Pancreas (tissue), 10 donors: ENCODE measurements at regions of chr12 and their contacts with region 1.

Region 1: DNA sequence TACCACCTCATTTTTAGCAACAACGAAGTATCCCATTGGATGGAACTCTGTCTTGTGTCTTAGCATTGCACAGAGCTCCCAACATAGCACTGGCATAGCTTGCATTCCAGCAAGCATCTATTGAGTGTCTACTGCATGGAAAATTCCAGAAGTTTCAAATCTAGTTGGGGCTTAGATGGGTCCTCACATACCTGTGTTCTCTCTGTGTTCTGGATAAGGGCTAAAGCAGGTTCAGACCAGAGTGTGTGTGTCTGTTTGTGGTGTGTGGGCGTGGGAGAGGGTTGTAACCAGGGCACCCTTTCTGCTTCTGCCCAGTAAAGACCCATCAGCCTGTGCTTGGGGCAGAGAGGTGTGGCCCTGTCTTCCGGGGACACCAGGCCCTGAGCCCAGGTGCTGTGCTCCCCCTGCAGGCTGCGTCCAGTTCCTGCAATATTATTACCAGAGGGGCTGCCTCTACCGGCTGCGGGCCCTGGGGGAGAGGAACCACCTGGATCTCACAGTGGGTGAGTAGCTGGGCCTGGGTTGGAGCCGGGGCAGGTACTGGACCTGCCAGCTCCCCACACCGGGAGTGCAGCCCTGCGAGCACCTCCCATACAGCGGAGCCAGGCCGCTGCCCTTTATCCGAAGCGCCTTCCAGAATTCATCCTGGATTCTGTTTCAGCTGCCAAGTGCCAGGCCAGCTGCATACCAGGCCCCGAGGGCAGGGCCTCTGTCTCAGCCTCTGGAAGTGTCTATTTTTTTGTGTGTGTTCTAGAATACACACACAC is 20.3 kb downstream of the RHOF start:
- DNase-seq: peak; percentile 55 to 87 (median 76)
- ATAC-seq: peak; percentile 72 to 93 (median 86)
- H3K4me3 ChIP-seq: no peak overlapping the region
- H3K27ac ChIP-seq: no peak overlapping the region
- H3K4me1 ChIP-seq: no peaks in the 10 kb centered on the region
- H3K27me3 ChIP-seq: no peaks in the 10 kb centered on the region
- CTCF ChIP-seq: peak; percentile 42 to 67 (median 62)

Region 2: GRCh38 chr12:121499929-121500793 is 273.0 kb before region 1 on chr12:
- intact Hi-C with region 1: no loop called
- DNase-seq: peak; percentile 42 to 93 (median 72)
- ATAC-seq: peak; percentile 82 to 97 (median 95)
- H3K4me3 ChIP-seq: no peak overlapping the region
- H3K27ac ChIP-seq: no peak overlapping the region
- H3K4me1 ChIP-seq: no peaks in the 10 kb centered on the region
- H3K27me3 ChIP-seq: no peaks in the 10 kb centered on the region
- CTCF ChIP-seq: peak; percentile 95 to 99 (median 98)

Region 3: DNA sequence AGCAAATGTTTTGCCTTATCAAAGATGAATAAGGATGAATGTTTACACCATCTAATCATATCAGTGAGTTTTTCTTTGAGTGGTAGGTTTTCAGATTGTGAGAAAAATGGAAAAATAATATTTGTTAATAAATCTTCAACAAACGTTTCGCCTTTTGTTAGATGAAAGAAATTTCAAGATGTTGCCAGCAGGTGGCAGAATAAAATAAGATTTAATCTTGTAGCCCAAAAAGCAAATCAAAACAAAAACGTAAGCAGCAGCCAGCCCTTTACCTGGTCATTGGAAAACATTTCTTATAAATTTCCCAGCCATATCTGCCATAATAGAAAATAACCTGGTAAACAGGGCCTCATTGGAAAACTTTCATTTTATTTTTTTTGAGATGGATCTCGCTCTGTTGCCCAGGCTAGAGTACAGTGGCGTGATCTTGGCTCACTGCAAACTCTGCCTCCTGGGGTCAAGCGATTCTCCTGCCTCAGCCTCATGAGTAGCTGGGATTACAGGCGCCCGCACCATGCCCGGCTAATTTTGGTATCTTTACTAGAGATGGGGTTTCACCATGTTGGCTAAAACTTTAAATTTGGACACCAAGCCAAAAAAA is 76.0 kb before region 1 on chr12:
- intact Hi-C with region 1: loop called (anchors 5 to 10 kb)
- DNase-seq: peak in 1 of 6 donors; percentile 7
- ATAC-seq: peak in 3 of 4 donors; percentile 71 to 78 (median 72)
- H3K4me3 ChIP-seq: no peak overlapping the region
- H3K27ac ChIP-seq: no peak overlapping the region
- H3K4me1 ChIP-seq: no peaks in the 10 kb centered on the region
- H3K27me3 ChIP-seq: no peaks in the 10 kb centered on the region
- CTCF ChIP-seq: peak in 3 of 4 donors; percentile 22 to 45 (median 42)

Region 4: DNA sequence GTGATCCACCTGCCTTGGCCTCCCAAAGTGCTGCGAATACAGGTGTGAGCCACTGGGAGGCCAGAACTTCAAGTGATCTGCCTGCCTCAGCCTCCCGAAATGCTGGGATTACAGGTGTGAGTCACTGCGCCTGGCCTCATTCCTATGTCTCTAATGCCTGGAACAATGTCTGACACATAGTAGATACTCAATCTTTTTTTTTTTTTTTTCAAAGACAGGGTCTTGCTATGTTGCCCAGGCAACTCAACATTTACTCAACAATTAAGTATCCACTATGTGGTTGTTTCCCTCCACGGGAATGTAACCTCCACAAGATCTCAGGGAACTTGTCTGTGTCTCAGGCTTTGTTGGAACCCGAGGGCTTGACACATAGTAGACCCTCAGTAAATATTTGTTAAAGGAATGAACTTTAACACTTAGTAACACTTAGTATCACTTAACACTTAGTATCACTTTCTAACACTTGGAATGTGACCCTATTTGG is 63.7 kb before region 1 on chr12:
- intact Hi-C with region 1: loop called in 1 of 3 experiments (anchors 10 kb)
- DNase-seq: peak in 1 of 6 donors; percentile 7
- ATAC-seq: no peak
- H3K4me3 ChIP-seq: no peak overlapping the region
- H3K27ac ChIP-seq: no peak overlapping the region
- H3K4me1 ChIP-seq: no peaks in the 10 kb centered on the region
- H3K27me3 ChIP-seq: no peaks in the 10 kb centered on the region
- CTCF ChIP-seq: no peak

Region 5: DNA sequence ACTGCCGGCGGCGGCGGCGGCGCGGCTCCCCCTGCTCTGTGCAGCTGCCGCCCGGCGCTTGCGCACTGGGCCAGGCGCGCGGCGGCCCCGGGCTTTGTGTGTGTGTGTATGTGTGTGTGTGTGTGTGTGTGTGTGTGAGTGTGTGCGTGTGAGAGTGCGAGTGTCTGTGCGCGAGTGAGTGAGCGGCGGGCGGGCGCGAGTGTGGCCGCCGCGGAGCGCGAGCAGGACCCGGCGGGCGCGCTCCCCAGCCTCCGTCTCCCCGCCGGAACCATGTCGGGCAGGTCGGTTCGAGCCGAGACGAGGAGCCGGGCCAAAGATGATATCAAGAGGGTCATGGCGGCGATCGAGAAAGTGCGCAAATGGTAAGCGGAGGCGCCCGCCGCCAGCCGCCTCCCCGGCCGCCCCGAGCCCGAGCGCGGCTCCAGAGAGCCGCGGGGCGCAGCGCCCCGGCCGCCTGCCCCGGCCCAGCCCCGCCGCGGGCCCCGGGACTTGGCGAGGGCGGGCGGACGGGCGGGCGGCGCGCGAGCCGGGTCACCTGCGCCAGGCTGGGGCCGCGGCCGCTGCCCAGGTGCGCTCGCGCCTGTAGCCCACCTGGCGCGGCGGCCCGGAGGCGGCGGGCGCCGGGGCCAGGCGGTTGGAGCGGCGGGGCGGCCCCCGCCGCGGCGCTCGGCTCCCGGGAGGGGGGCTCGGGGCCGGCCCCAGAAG is 248.8 kb after region 1 on chr12 and contains the start of gene BCL7A:
- intact Hi-C with region 1: no loop called
- DNase-seq: peak; percentile 73 to 92 (median 80)
- ATAC-seq: peak; percentile 49 to 78 (median 69)
- H3K4me3 ChIP-seq: peak within 1 kb of the TSS; percentile 44 to 77 (median 67)
- H3K27ac ChIP-seq: peak within 1 kb of the TSS; percentile 87 to 96 (median 90)
- H3K4me1 ChIP-seq: peaks cover 11 to 14% (median 13%) of the 10 kb centered on the region in 3 donors
- H3K27me3 ChIP-seq: no peaks in the 10 kb centered on the region
- CTCF ChIP-seq: no peak
- total RNA-seq, gene BCL7A: 8.3 to 13.4 (median 10.5) TPM